Right ventricle myocardium superior (tissue), 1 donor: ENCODE measurements at regions of chr1 and their contacts with region 1.

Region 1: GRCh38 chr1:182604169-182605164 is at the start of gene RGS16:
- DNase-seq: peak; percentile 97
- ATAC-seq: peak; percentile 98
- total RNA-seq, gene RGS16: 1.0 TPM

Region 2: GRCh38 chr1:182677397-182678098 is 73.1 kb after region 1 on chr1:
- intact Hi-C with region 1: no loop called
- DNase-seq: no peak
- ATAC-seq: no peak

Region 3: DNA sequence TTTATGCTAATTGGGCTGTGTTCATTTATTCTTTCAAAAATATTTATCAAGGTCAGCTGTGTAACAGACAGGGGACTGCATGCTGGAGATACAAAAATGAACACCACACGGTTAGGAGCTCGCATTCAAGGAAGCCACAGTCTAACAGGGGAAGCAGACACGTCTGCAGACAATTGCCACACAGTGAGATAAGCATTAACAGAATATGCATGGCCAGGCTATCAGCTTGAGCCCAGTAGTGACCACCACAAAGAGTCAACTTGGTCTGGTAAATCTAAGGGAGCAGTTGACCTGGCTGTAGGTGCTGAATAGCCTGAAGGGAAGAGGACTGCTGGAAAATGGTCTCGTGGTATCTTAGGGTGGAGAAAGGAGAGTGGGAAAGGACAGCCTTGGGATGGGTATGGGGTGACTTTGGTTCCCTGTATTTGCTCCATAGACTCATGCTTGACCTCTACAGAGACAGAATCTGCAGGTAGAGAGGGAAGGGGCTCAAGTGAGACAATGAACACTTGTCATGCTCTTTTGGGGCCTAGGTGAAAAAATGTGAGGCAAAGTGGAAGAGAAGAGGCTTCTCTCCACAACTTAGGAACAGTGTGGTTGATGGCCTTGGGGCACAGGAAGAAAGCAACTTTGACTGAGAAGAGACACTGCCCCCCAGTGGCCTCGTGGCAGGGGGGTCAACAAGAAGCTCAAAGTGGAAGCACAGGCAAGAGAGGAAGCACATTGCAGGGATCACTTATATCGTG is 177.5 kb after region 1 on chr1:
- intact Hi-C with region 1: loop called (anchors 2 kb)
- DNase-seq: peak; percentile 80
- ATAC-seq: peak; percentile 87